ENCODE measurements at regions of chr1 and their contacts with region 1.

Region 1: GRCh38 chr1:33430692-33431593 is at the start of gene PHC2:
- DNase-seq: peak; percentile 99
- H3K4me3 ChIP-seq: peak within 1 kb of the TSS; percentile 65 to 91 (median 83)
- H3K27ac ChIP-seq: peak within 1 kb of the TSS; percentile 74 to 87 (median 82)
- H3K4me1 ChIP-seq: peaks cover 27 to 51% (median 45%) of the 10 kb centered on the region in 4 donors
- H3K27me3 ChIP-seq: no peaks in the 10 kb centered on the region
- CTCF ChIP-seq: peak in 2 of 3 experiments; percentile 39 to 41
- EP300 ChIP-seq: no peak
- POLR2A ChIP-seq: no peak
- total RNA-seq, gene PHC2: 104 to 274 (median 201) TPM

Region 2: DNA sequence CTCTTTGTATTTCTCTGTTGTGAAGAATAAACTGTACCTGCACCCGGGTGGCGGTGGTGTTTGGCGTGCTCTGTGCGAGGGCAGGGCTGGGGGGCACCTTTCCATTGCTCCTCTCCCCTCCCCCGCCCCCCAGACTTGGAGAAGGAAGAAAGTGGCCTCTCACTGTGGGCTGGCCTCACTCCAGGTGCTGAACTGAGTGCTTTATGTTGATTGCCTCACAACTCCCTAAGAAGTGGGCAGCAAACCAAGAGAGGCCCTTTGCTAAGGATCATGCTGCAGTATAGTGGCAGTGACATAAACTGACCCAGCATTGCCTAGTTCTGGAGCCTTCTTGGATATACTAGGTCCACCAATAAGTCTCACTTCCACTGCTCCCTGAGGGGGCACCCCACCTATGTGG is 130.3 kb before region 1 on chr1:
- intact Hi-C with region 1: loop called (anchors 5 kb)
- DNase-seq: no peak
- H3K4me3 ChIP-seq: no peak overlapping the region
- H3K27ac ChIP-seq: peak overlapping the region; percentile 18 to 67 (median 54)
- H3K4me1 ChIP-seq: peaks cover 16 to 42% (median 30%) of the 10 kb centered on the region in 4 donors
- H3K27me3 ChIP-seq: no peaks in the 10 kb centered on the region
- CTCF ChIP-seq: no peak
- EP300 ChIP-seq: no peak
- POLR2A ChIP-seq: no peak

Region 3: GRCh38 chr1:33378976-33379375 is 52.0 kb before region 1 on chr1:
- intact Hi-C with region 1: loop called (anchors 10 kb)
- DNase-seq: no peak
- H3K4me3 ChIP-seq: no peak overlapping the region
- H3K27ac ChIP-seq: no peak overlapping the region
- H3K4me1 ChIP-seq: peaks cover 29 to 46% (median 38%) of the 10 kb centered on the region in 4 donors
- H3K27me3 ChIP-seq: no peaks in the 10 kb centered on the region
- CTCF ChIP-seq: no peak
- EP300 ChIP-seq: no peak
- POLR2A ChIP-seq: no peak

Region 4: DNA sequence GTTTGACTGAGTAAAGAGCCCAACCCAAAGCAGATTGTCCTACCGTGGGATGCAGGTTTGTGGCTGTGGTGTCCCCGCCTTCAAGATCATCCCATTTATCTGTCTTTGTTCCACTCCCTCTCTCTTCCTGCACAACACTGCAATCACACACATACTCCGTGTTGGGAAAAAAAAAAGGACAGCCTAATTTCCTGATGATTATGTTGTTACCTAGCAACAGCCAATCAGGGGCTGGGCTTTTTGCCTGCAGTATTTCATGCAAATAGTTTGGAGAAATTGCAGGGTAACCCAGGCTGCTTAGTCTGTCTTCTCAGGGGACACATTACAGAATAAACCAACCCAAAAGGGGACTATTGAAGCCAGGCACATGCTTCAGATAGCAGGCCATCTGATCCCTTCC is 38.3 kb before region 1 on chr1:
- intact Hi-C with region 1: loop called (anchors 5 kb)
- DNase-seq: peak; percentile 45
- H3K4me3 ChIP-seq: no peak overlapping the region
- H3K27ac ChIP-seq: peak overlapping the region in 1 of 4 donors; percentile 44
- H3K4me1 ChIP-seq: peaks cover 28 to 68% (median 58%) of the 10 kb centered on the region in 4 donors
- H3K27me3 ChIP-seq: no peaks in the 10 kb centered on the region
- CTCF ChIP-seq: no peak
- EP300 ChIP-seq: no peak
- POLR2A ChIP-seq: no peak

Region 5: DNA sequence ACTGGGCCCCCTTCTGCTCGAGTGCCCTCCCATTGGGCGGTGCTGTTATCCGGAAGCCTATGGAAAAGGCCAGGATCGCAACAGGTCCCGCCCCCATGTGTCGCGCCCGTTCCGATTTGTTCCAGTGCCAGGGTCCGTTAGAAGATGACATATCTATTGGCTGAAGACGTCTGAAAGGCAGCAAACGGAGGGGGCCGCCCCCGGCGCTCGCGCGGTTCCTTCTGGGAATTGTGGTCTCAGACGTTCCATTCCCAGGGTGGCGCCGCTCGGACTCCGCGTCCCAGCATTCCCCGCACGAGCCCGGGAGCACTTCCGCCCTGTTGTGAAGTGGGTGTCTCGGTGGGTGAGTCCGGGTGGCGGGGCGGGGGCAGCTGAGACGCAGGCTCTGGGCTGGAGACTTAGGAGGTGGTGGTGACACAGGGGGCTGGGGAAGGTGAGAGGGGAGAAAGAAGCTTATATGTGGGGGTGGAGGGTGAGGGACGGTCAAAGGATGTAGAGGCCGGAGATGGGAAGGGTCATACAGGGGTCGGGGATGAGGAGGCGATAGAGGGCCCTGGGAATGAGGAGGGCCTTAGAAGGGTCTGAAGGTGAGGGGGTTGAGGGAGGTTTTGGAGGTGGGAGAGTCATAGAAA is 41.5 kb after region 1 on chr1 and contains the start of gene ZSCAN20:
- intact Hi-C with region 1: loop called (anchors 5 kb)
- DNase-seq: peak; percentile 99
- H3K4me3 ChIP-seq: peak within 1 kb of the TSS; percentile 69 to 72 (median 70)
- H3K27ac ChIP-seq: peak within 1 kb of the TSS; percentile 75 to 84 (median 80)
- H3K4me1 ChIP-seq: peaks cover 27 to 56% (median 41%) of the 10 kb centered on the region in 4 donors
- H3K27me3 ChIP-seq: no peaks in the 10 kb centered on the region
- CTCF ChIP-seq: peak in 2 of 3 experiments; percentile 12 to 28
- EP300 ChIP-seq: no peak
- POLR2A ChIP-seq: no peak
- total RNA-seq, gene ZSCAN20: 6.6 to 8.2 (median 7.7) TPM

Region 6: DNA sequence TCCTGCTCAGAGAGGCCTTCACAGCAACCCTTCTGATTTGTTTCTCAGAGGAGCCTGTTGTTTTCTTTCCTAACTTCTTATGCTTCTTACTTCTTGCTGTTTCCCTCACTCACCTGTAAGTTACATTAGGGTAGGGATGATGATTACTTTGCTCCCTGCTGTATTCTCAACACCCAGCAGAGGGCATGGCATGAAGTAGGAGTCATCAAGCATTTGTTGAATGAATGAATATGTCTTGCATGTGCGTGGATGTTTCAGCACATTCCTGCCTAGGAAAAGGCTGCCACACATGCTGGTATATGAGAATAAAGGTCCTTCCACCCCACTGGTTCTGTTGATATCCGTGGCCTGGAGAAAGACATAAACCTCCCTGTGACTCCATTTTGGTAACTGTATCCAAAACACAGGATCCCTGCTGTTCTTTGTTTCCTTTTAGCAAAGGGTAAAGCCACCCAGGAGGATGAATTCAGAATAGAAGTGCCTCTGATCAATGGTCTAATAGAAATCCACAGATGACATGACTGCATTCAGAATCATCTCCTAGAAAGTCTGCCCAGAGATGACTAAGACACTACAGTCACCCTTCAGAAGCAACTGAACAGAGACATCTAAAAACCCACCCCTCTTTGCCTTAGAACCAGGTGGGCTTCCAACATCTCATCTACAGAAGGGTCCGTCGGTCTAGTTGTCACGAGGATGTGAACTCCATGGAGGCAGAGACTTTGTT is 210.3 kb after region 1 on chr1:
- intact Hi-C with region 1: no loop called
- DNase-seq: no peak
- H3K4me3 ChIP-seq: no peak overlapping the region
- H3K27ac ChIP-seq: no peak overlapping the region
- H3K4me1 ChIP-seq: no peaks in the 10 kb centered on the region
- H3K27me3 ChIP-seq: peaks cover 0 to 31% (median 0%) of the 10 kb centered on the region in 4 donors
- CTCF ChIP-seq: no peak
- EP300 ChIP-seq: no peak
- POLR2A ChIP-seq: no peak

Measured in esophagus muscularis mucosa (tissue), 4 donors.